ENCODE measurements at regions of chr2 and their contacts with region 1.

Region 1: GRCh38 chr2:239934571-239935171 is 90.5 kb downstream of the NDUFA10 start:
- DNase-seq: peak; percentile 76
- ATAC-seq: peak; percentile 86

Region 2: DNA sequence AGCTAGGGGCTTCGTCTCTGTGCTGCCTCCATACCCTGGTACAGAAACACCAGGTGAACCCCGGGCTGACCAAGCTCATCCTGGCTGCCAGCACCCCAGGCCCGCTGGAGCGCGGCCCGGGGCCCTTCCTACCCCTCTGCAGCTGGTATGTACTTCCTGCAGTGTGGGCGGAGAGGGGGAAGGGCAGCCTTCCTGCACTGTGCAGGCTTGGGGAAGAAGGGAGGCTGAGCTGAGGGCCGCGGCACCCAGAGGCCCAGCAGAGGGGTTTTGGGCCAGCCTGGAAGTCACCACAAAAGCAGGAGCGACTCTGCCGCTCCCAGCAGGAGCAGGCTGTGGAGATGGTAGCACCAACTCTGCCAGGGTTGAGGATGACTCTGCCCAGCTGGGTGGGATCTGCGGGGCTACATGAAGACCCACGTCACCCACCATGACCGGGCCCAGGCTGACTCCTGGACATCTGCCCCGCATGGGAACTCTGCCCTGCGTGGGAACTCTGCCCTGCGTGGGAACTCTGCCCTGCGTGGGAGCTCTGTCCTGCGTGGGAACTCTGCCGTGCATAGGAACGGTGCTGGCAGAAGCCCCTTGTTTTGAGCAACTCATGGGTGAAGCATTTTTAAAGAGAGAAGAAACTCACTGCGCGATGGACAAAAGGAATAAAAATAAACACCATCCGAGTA is 182.9 kb before region 1 on chr2:
- intact Hi-C with region 1: no loop called
- DNase-seq: peak; percentile 45
- ATAC-seq: peak; percentile 31

Region 3: DNA sequence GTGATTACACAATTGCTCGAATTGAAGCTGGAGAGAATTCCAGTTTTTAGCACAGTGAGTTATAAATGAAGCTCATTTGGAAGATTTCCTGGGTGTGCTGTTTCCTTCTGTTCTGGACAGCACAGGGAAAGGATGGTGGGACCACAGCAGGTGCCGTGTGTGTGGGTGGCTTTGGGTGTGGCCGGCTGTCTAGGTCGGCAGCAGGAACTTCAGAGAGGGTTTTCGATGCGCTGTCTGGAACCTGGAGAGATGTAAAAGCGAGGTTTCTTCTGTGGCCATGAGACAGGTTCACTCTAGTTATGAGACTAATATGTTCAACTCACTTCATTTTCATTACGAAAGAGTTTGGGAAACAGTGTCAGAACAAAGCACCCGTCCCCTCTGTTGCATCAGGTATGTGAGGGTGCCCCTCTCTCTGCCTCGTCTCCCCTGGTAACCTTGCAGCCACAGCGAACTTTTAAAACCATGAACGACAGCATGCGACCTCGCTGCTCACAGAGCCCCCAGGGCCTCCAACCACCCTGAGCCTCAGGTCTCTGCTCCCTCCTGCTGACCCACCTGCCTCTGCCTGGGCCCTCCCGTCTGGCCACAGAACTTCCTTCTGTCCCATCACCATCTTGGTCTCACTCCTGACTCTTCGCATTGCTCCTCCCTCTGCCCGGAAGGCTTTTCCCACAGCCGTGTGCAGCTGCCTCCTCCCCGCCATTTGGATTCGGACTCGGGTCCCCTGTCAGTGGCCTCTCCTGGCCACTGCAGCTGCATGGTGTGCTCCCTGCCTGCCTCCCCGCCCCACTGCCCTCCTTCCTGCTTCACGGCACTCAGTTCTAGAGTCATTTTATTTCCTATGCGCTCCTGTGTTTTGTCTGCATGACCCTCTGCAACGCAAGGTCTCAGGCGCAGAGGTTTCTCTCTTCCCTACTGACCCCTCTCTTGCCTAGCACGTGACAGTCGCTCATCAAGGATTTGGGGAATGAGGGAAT is 60.7 kb before region 1 on chr2:
- intact Hi-C with region 1: no loop called
- DNase-seq: no peak
- ATAC-seq: no peak

Region 4: GRCh38 chr2:239991689-239992314 is 57.1 kb after region 1 on chr2:
- intact Hi-C with region 1: loop called (anchors 5 kb)
- DNase-seq: no peak
- ATAC-seq: peak; percentile 71

Measured in Right ventricle myocardium superior (tissue), 1 donor.